CD4-positive, alpha-beta memory T cell (primary cell): ENCODE measurements at regions of chrX and their contacts with region 1.

Region 1: GRCh38 chrX:129540068-129540653 is at the start of gene OCRL:
- DNase-seq: peak in 4 of 5 donors; percentile 25 to 38 (median 34)
- H3K4me3 ChIP-seq: peak within 1 kb of the TSS; percentile 11 to 28
- H3K4me3 Mint-ChIP-seq: peak within 1 kb of the TSS; percentile 72 to 92 (median 78)
- H3K27ac ChIP-seq: no peak within 1 kb of the TSS
- H3K27ac Mint-ChIP-seq: peak within 1 kb of the TSS in 1 of 7 donors; percentile 9
- H3K4me1 ChIP-seq: no peaks in the 10 kb centered on the region
- H3K4me1 Mint-ChIP-seq: peaks cover 0 to 13% (median 2%) of the 10 kb centered on the region in 4 donors
- H3K27me3 ChIP-seq: no peaks in the 10 kb centered on the region
- H3K27me3 Mint-ChIP-seq: peaks cover 4 to 7% of the 10 kb centered on the region in 2 donors
- total RNA-seq, gene OCRL: 2.0 to 2.4 TPM

Region 2: DNA sequence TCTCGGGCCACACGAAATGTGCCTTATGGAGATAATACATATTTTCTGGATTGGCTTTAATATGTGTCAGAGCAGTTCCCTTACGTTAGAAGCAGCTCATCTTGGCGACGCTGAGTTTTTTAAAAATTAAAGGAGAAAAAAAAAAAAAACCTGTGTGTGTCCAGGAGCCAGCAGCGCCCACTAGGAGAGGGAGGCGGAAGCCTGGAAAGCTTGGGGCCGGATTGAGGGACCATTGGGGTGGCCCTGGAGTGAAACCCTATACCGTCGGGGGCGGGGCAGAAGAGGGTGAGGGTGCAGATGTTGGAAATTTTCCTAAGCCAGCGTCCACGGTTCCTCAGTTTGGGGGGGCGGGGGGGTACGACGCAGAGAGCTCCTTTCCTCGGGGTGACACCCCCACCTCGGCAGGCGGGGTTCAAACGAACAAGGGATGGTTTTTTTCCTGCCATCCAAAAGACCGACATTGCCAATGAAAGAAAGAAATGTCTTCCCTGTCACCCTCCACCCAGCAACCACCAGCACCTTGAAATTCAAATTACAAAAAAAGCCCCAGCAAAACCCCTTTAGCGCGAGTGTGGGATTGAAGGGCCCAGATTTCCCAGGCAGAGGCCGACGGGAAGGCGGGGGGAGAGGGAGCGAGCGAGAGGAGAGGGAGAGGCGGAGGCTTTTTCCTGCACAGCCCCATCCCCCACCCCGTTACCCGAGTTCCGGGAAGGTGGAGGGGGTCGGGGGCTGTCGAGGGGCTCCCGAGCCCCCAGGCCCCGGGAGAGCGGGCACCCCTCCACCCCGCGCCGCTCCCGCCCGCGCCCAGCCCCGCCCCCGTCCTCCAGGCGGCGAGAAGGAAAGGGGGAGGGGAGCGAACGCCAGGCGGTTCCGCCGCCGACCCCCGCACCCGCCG is 17.7 kb before region 1 on chrX:
- CTCF ChIA-PET with region 1: interaction called, 3 read pairs
- POLR2A ChIA-PET with region 1: no interaction called
- intact Hi-C with region 1: loop called (anchors 2 kb)
- DNase-seq: no peak
- H3K4me3 ChIP-seq: peak overlapping the region in 1 of 2 donors; percentile 41
- H3K4me3 Mint-ChIP-seq: peak overlapping the region; percentile 82 to 89 (median 86)
- H3K27ac ChIP-seq: no peak overlapping the region
- H3K27ac Mint-ChIP-seq: peak overlapping the region in 3 of 7 donors; percentile 67 to 74 (median 68)
- H3K4me1 ChIP-seq: peaks cover 7% of the 10 kb centered on the region
- H3K4me1 Mint-ChIP-seq: peaks cover 0 to 6% (median 1%) of the 10 kb centered on the region in 4 donors
- H3K27me3 ChIP-seq: no peaks in the 10 kb centered on the region
- H3K27me3 Mint-ChIP-seq: peaks cover 0 to 2% of the 10 kb centered on the region in 2 donors

Region 3: GRCh38 chrX:129665910-129666644 is 125.9 kb after region 1 on chrX:
- CTCF ChIA-PET with region 1: no interaction called
- POLR2A ChIA-PET with region 1: no interaction called
- intact Hi-C with region 1: no loop called
- DNase-seq: no peak
- H3K4me3 ChIP-seq: no peak overlapping the region
- H3K4me3 Mint-ChIP-seq: no peak overlapping the region
- H3K27ac ChIP-seq: no peak overlapping the region
- H3K27ac Mint-ChIP-seq: no peak overlapping the region
- H3K4me1 ChIP-seq: no peaks in the 10 kb centered on the region
- H3K4me1 Mint-ChIP-seq: no peaks in the 10 kb centered on the region
- H3K27me3 ChIP-seq: no peaks in the 10 kb centered on the region
- H3K27me3 Mint-ChIP-seq: no peaks in the 10 kb centered on the region